ENCODE measurements at regions of chr17 and their contacts with region 1.

Region 1: DNA sequence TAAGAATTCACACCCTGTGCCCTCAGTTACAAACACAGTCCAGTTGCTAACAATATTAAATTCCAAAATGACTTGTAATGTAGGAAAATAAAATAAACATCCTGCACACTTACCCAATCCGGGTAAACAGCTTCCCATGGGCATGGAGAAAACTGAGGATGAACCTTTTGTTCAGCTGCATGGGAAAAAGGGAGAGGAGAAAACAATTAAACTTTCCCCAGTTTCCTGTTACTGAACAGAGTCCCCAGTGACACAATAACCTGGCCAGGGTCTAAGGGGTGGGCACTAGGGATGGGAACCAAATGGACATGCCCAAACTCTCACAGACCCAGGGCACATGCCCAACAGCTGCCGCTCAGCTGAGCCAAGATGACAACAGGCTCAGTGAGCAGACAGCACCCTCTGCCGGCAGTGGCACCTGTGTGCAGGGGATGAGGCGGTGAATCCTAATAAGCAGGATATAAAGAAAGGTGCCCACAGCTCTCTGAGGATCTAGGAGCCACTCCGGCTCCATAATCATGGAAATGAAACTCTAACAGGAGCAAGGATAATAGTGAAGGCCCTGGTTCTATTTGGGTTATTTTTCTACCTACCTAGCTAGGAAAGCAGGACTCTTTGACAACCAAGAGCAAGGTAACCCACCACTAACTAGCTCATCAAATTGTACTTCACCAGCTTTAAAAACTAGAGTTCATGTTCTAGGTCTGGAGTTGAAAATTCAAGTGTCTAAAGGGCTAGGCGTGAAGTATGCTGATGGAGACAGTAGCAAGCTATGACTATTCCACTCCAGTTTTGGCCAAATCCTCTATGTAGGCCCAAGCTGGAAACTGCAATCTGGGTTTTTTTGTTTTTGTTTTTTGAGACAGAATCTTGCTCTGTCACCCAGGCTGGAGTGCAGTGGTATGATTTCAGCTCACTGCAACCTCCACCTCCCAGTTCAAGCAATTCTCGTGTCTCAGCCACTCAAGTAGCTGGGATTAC is 58.8 kb downstream of the SMG6 start:
- DNase-seq: peak; percentile 72 to 85
- ATAC-seq: peak; percentile 97

Region 2: GRCh38 chr17:2054512-2055291 is 190.1 kb before region 1 on chr17 and contains the start of gene HIC1:
- intact Hi-C with region 1: loop called in 1 of 2 experiments (anchors 2 kb)
- DNase-seq: peak in 1 of 2 donors; percentile 78
- ATAC-seq: peak; percentile 56
- total RNA-seq, gene HIC1: 4.8 to 12.8 TPM

Measured in left colon (tissue), 2 donors.